ENCODE measurements at regions of chr10 and their contacts with region 1.

Region 1: GRCh38 chr10:51619365-51619764 is 80.0 kb downstream of the CSTF2T start:
- DNase-seq: no peak

Region 2: DNA sequence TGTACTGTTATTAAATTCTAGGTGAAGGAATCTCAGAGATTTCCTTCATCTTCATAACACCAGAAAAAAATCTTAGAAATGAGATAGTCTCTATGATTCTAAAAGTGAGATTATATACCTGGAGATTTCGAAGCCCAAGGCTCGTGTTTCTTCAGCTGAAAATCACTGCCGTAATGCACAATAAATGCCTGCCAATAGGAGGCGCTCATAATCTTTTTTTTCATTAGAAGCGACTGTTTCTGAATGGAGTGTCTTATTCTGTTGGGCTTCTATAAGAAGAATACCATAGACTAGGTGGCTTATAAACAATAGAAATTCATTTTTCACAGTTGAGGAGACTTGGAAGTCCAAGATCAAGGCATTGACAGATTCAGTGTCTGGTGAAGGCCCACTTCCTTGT is 250.4 kb before region 1 on chr10:
- intact Hi-C with region 1: no loop called
- DNase-seq: no peak

Region 3: DNA sequence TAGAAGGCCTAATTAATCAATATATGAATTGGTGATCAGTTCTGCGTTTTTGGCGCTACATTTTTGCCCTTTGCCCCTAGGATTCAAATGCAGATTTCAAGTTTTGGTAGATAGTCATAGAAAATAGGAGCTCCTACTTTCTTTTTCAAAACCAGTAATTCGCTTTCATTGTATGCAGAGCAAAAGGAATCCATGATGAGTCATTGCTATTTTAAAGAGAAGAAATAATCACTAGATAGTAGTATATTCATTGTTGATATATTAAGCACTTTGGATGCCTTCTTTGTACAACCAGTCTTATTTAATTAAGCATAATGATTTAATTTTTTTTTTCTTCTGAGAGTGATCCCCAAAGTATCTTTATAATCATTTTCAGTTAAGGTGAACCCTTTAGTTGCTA is 29.7 kb after region 1 on chr10:
- intact Hi-C with region 1: loop called in 1 of 2 experiments (anchors 1 kb)
- DNase-seq: no peak

Region 4: DNA sequence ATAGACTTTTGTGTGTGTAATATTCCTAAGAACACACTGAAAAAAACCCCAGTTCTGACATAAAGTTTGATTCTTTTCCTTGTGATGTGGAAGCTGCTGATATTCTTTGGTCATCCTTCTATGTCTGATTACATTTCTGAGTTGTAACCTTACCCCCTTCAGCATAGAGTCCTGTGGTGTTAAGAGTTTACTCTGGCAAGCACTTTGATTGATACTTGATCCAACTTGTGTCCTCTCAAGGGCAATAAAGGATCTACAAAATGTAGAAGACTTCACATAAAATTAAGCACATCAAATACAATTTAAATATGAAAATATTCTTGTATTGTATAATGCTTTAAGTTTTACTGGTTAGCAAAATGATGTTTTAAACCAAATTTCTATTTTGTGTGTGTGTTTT is 473.0 kb after region 1 on chr10:
- intact Hi-C with region 1: no loop called
- DNase-seq: no peak